Natural killer cell (primary cell): ENCODE measurements at regions of chr6 and their contacts with region 1.

Region 1: GRCh38 chr6:41334482-41335040 is 847 bp upstream of the NCR2 start:
- DNase-seq: peak in 1 of 2 donors; percentile 54
- ATAC-seq: no peak
- H3K4me3 ChIP-seq: no peak overlapping the region
- H3K4me3 Mint-ChIP-seq: peak overlapping the region; percentile 83
- H3K27ac ChIP-seq: peak overlapping the region; percentile 94
- H3K27ac Mint-ChIP-seq: peak overlapping the region; percentile 90 to 96
- H3K4me1 ChIP-seq: peaks cover 56% of the 10 kb centered on the region
- H3K4me1 Mint-ChIP-seq: peaks cover 47 to 56% of the 10 kb centered on the region in 2 donors
- H3K27me3 ChIP-seq: no peaks in the 10 kb centered on the region
- H3K27me3 Mint-ChIP-seq: no peaks in the 10 kb centered on the region
- CTCF ChIP-seq: no peak

Region 2: DNA sequence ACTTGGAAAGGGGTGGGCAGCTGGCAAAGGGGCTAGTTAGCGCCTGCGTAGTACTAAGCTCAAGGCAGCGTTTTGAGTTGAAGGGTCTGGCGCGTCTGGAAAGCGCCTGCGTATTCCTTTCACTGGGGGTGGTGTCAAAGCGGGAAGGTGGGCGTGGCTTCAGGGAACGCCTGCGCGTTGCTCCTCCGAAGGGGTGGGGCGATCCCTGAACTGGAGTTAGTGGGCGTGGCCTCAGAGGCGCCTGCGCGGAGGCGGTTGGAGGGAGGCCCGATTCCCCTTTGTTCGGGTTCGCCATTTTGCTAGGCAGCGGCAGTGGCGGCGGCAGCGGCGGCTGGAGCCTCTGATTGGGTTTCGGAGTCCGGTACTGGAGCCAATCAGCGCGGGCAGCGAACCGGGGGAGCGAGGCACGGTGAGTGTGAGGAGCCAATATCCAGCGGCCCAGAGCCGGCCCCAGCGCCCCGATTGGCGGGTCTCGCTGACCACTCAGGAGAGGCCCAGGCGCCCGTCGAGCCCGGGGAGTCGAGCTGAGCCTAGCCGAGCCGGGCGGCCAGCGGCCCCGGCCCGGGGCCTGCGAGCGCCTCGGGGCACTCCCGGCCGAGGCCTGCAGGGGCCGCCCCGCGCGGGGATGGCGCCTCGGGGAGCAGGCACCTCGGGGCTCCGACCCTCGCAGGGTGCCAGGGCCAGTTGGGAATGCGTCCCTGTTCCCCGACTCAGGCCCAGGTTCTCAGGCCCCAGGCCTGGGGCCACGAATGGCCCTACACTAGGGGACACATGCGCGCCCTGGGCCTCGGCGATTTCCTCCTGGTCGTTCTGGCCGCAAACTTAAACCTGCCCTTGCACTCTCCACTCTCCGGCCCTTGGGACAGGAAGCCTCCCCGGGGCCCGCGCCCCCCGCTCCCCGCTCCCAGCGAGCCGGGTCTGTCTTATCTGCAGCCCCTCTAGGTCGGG is 261.6 kb before region 1 on chr6 and contains the start of gene NFYA:
- intact Hi-C with region 1: loop called (anchors 5 kb)
- DNase-seq: peak; percentile 100
- ATAC-seq: peak; percentile 68 to 85 (median 71)
- H3K4me3 ChIP-seq: peak within 1 kb of the TSS; percentile 99
- H3K4me3 Mint-ChIP-seq: peak within 1 kb of the TSS; percentile 92
- H3K27ac ChIP-seq: peak within 1 kb of the TSS; percentile 99
- H3K27ac Mint-ChIP-seq: peak within 1 kb of the TSS; percentile 94 to 98
- H3K4me1 ChIP-seq: peaks cover 9% of the 10 kb centered on the region
- H3K4me1 Mint-ChIP-seq: peaks cover 46 to 51% of the 10 kb centered on the region in 2 donors
- H3K27me3 ChIP-seq: no peaks in the 10 kb centered on the region
- H3K27me3 Mint-ChIP-seq: no peaks in the 10 kb centered on the region
- CTCF ChIP-seq: peak; percentile 58
- total RNA-seq, gene NFYA: 27.5 to 33.1 (median 33.0) TPM

Region 3: GRCh38 chr6:41442800-41443501 is 108.4 kb after region 1 on chr6:
- intact Hi-C with region 1: loop called (anchors 10 kb)
- DNase-seq: peak in 1 of 2 donors; percentile 55
- ATAC-seq: peak in 1 of 3 donors; percentile 23
- H3K4me3 ChIP-seq: no peak overlapping the region
- H3K4me3 Mint-ChIP-seq: peak overlapping the region; percentile 13
- H3K27ac ChIP-seq: peak overlapping the region; percentile 51
- H3K27ac Mint-ChIP-seq: no peak overlapping the region
- H3K4me1 ChIP-seq: peaks cover 53% of the 10 kb centered on the region
- H3K4me1 Mint-ChIP-seq: peaks cover 33 to 39% of the 10 kb centered on the region in 2 donors
- H3K27me3 ChIP-seq: peaks cover 34% of the 10 kb centered on the region
- H3K27me3 Mint-ChIP-seq: peaks cover 72 to 78% of the 10 kb centered on the region in 2 donors
- CTCF ChIP-seq: peak; percentile 39